ENCODE measurements at regions of chr6 and their contacts with region 1.

Region 1: GRCh38 chr6:16770701-16771569 is 9.7 kb upstream of the ATXN1 start:
- DNase-seq: peak; percentile 74 to 90 (median 81)
- H3K4me3 ChIP-seq: no peak overlapping the region
- H3K27ac ChIP-seq: peak overlapping the region in 1 of 5 donors; percentile 11
- H3K4me1 ChIP-seq: peaks cover 4 to 31% of the 10 kb centered on the region in 2 donors
- H3K27me3 ChIP-seq: no peaks in the 10 kb centered on the region
- CTCF ChIP-seq: peak; percentile 89 to 93 (median 90)
- POLR2A ChIP-seq: no peak

Region 2: DNA sequence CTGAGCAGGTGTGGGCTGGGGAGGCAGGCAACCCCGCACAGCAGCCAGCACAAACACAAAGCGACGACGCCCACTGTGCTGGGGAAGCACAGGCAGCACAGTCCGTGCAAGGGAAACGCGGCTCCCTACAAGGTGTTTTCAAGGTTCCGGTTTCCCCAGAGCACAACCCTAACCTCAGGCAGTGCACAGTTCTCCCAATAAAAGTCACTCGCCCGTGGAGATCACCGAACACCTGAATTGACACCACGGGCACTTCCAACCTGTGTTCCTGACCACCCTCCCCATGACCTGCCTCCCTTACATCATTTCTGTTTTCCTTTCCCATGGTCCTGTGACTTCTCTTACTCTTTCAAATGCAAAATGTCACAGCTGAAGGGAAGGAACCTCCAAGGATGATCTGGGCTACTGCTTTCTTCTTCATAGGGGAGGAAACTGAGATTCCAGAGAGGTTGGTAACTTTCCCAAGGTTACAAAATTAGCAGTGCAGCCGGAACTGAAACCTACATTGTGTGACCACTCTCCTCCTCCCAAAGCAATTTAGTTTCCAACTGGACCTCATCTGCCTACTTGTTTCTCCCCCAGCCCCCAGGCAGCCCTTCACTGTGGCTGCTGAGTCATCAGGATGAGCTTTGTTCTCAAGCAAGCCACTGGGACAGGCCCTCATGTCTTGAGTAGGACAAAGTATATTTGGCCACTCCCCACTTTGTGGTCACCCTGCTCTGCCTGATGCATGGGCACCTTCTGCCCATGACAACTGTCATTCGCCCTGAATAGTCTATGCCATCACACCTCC is 134.9 kb before region 1 on chr6:
- intact Hi-C with region 1: no loop called
- DNase-seq: peak in 5 of 7 donors; percentile 22 to 53 (median 30)
- H3K4me3 ChIP-seq: no peak overlapping the region
- H3K27ac ChIP-seq: no peak overlapping the region
- H3K4me1 ChIP-seq: peaks cover 5 to 9% of the 10 kb centered on the region in 2 donors
- H3K27me3 ChIP-seq: no peaks in the 10 kb centered on the region
- CTCF ChIP-seq: no peak
- POLR2A ChIP-seq: no peak

Region 3: GRCh38 chr6:16723826-16724225 is 47.1 kb before region 1 on chr6:
- intact Hi-C with region 1: no loop called
- DNase-seq: peak in 4 of 7 donors; percentile 42 to 61 (median 49)
- H3K4me3 ChIP-seq: no peak overlapping the region
- H3K27ac ChIP-seq: peak overlapping the region in 4 of 5 donors; percentile 25 to 62 (median 40)
- H3K4me1 ChIP-seq: peaks cover 11 to 40% of the 10 kb centered on the region in 2 donors
- H3K27me3 ChIP-seq: no peaks in the 10 kb centered on the region
- CTCF ChIP-seq: no peak
- POLR2A ChIP-seq: peak in 1 of 2 donors; percentile 30

Region 4: GRCh38 chr6:16854986-16855385 is 84.1 kb after region 1 on chr6:
- intact Hi-C with region 1: no loop called
- DNase-seq: no peak
- H3K4me3 ChIP-seq: no peak overlapping the region
- H3K27ac ChIP-seq: no peak overlapping the region
- H3K4me1 ChIP-seq: peaks cover 0 to 23% of the 10 kb centered on the region in 2 donors
- H3K27me3 ChIP-seq: no peaks in the 10 kb centered on the region
- CTCF ChIP-seq: no peak
- POLR2A ChIP-seq: no peak

Region 5: GRCh38 chr6:16909658-16910360 is 138.9 kb after region 1 on chr6:
- intact Hi-C with region 1: no loop called
- DNase-seq: no peak
- H3K4me3 ChIP-seq: no peak overlapping the region
- H3K27ac ChIP-seq: no peak overlapping the region
- H3K4me1 ChIP-seq: no peaks in the 10 kb centered on the region
- H3K27me3 ChIP-seq: no peaks in the 10 kb centered on the region
- CTCF ChIP-seq: no peak
- POLR2A ChIP-seq: no peak

Region 6: DNA sequence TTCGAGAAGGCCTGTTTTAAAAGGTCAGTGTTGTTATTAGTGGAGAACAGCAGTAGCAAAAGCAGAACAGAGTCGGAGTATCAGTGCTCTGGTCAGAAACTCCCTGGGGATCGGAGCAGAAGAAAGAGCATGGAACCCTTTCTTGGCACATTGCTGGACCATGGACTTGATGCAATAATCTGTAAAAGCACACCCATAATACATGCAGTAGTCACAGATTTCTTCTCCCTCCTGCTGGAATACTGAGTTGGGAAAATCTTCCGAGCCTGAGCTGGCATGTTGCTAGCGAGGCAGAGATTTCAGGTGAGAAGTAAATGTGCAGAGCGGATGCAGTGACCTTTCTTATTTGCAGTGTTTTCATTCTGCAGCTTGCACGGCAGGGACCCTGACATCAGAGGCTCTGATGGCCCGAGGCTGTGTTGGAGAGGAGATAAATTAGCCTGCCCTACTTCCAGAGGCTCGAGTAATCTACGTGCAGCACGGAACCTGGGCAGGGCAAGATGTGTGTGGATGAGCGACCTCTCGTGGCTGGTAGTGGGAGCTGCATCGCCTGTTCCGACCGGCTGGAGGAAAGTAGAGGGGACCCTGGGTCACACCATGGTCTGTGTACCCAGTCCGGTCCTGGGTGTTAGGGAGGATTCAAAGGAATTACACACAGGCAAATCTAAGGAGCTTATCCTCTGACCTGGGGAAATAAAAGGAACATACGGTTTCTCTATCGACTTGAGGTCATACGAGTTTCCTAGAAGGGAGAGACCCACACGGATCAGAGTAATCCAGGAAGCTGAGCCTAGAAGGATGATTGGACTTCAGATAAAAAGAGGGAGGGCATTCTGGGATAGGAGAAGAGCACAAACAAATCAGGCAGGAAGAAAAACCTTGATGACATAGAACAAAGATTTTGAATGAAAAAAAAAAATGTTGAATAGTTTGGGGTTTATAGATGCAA is 193.9 kb after region 1 on chr6:
- intact Hi-C with region 1: loop called in 1 of 2 experiments (anchors 10 kb)
- DNase-seq: peak; percentile 79 to 96 (median 85)
- H3K4me3 ChIP-seq: no peak overlapping the region
- H3K27ac ChIP-seq: no peak overlapping the region
- H3K4me1 ChIP-seq: peaks cover 5 to 10% of the 10 kb centered on the region in 2 donors
- H3K27me3 ChIP-seq: no peaks in the 10 kb centered on the region
- CTCF ChIP-seq: peak; percentile 85 to 95 (median 90)
- POLR2A ChIP-seq: no peak

Region 7: DNA sequence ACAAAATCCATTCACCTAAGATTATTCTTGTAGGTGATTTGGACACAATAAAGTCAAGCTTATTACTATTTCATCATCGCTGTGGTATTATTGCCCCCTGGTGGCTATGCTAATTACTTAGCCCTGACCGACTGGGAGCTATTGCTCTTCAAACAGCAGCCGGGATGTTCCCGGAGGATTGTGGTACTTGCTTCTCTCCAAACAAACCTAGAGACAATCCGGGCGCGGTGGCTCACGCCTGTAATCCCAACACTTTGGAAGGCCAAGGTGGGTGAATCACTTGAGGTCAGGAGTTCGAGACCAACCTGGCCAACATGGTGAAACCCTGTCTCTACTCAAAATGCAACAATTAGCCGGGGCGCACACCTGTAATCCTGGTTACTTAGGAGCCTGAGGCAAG is 315.5 kb after region 1 on chr6:
- intact Hi-C with region 1: loop called in 1 of 2 experiments (anchors 10 kb)
- DNase-seq: peak; percentile 37 to 74 (median 49)
- H3K4me3 ChIP-seq: no peak overlapping the region
- H3K27ac ChIP-seq: no peak overlapping the region
- H3K4me1 ChIP-seq: no peaks in the 10 kb centered on the region
- H3K27me3 ChIP-seq: peaks cover 7% of the 10 kb centered on the region
- CTCF ChIP-seq: peak; percentile 40 to 66 (median 56)
- POLR2A ChIP-seq: no peak